Mammary epithelial cell (primary cell): ENCODE measurements at regions of chr1 and their contacts with region 1.

Region 1: DNA sequence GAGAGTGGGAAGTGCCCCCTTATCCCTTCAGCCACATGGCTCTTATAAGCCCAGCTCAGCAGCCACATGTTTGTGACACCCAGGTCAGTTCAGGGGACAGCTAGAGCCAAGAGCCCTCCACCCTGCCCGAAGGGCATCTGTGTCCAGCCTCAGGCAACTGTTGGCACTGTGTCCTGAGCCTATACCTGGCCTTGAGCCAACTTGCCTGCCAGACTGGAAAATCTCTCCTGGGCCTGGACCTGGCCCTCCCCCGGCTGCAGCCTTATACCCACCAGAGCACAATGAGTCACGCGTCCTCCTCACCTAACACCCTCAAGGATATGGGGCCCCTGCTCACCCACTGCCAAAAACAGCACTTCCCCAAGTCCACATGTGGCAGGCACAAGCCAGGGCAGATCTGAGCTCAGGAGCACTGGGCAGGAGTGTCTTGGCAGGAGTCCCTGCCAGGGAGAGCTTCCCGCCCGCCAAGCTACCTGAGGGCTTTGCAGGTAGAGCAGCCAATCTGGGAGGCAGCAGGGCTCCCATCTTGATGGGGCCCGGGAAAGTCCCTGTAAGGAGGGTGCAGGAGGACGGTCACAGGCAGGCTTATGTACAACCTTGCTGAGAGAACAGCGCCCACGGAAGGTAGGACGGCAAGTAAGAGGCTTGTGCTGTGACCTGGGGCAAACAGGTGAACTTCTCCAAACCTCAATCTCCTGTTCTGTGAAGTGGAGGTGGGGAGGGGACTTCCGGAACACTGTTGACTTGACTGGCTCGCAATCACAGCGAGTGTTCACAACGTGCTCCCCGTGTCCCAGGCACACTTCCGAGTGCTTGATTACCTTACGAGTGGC is 19.8 kb upstream of the HSPG2 start:
- DNase-seq: peak; percentile 99
- H3K4me3 ChIP-seq: peak overlapping the region in 1 of 3 experiments; percentile 7
- H3K27ac ChIP-seq: peak overlapping the region; percentile 52
- H3K4me1 ChIP-seq: peaks cover 26% of the 10 kb centered on the region
- H3K27me3 ChIP-seq: no peaks in the 10 kb centered on the region
- CTCF ChIP-seq: peak in 1 of 2 donors; percentile 37

Region 2: GRCh38 chr1:21703318-21703963 is 253.5 kb before region 1 on chr1:
- CTCF ChIA-PET with region 1: no interaction called
- dilution Hi-C with region 1: no loop called
- in situ Hi-C with region 1: loop called in 1 of 2 experiments (anchors 25 kb)
- intact Hi-C with region 1: loop called (anchors 2 kb)
- DNase-seq: peak; percentile 23
- H3K4me3 ChIP-seq: no peak overlapping the region
- H3K27ac ChIP-seq: no peak overlapping the region
- H3K4me1 ChIP-seq: no peaks in the 10 kb centered on the region
- H3K27me3 ChIP-seq: no peaks in the 10 kb centered on the region
- CTCF ChIP-seq: peak; percentile 40 to 43

Region 3: GRCh38 chr1:21882669-21883415 is 74.1 kb before region 1 on chr1:
- CTCF ChIA-PET with region 1: no interaction called
- dilution Hi-C with region 1: loop called (anchors 5 kb)
- in situ Hi-C with region 1: loop called in 1 of 2 experiments (anchors 5 kb)
- intact Hi-C with region 1: no loop called
- DNase-seq: no peak
- H3K4me3 ChIP-seq: no peak overlapping the region
- H3K27ac ChIP-seq: no peak overlapping the region
- H3K4me1 ChIP-seq: no peaks in the 10 kb centered on the region
- H3K27me3 ChIP-seq: no peaks in the 10 kb centered on the region
- CTCF ChIP-seq: no peak

Region 4: GRCh38 chr1:21904704-21905520 is 52.0 kb before region 1 on chr1:
- CTCF ChIA-PET with region 1: no interaction called
- dilution Hi-C with region 1: no loop called
- in situ Hi-C with region 1: no loop called
- intact Hi-C with region 1: loop called (anchors 2 kb)
- DNase-seq: peak; percentile 91
- H3K4me3 ChIP-seq: no peak overlapping the region
- H3K27ac ChIP-seq: peak overlapping the region; percentile 70
- H3K4me1 ChIP-seq: peaks cover 27% of the 10 kb centered on the region
- H3K27me3 ChIP-seq: no peaks in the 10 kb centered on the region
- CTCF ChIP-seq: no peak

Region 5: DNA sequence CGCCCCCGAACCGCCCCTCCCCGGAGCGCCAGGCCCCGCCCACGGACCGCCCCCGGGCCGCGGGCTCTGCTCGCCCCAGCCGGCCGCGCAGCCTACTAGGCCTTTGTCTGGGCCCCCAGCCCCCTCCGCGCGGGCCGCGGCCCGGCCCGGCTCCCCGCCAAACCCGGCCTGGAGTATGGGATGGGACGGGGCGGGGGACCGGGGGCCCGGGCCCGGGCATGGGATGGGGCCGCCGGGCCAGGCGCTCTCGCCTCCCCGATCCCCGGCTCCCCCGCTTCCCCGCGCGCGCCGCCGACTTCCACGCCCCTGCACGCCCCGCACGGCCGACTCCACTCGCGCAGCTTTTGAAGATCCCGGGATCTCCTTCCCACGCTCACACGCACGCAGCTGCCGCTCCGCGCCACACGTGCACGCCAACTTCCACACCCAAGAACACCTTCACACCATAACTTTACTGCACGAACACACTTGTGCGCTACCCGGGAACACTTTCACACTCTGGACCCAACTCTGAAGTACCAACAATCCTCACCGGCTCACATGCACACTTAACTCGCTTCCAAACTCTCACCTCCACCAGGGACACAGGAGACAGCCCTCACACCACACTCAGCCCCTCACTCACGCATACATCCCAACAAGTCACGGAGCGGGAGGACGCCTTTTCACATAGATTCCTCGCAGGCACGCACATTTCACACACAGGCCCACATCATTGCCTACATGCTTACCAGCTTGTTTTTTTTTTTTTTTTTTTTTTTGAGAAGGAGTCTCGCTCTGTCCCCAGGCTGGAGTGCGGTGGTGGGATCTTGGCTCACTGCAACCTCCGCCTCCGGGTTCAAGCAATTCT is 19.3 kb before region 1 on chr1:
- CTCF ChIA-PET with region 1: interaction called, 7 read pairs
- dilution Hi-C with region 1: no loop called
- in situ Hi-C with region 1: no loop called
- intact Hi-C with region 1: loop called (anchors 2 kb)
- DNase-seq: peak; percentile 79
- H3K4me3 ChIP-seq: peak overlapping the region; percentile 15 to 33 (median 18)
- H3K27ac ChIP-seq: peak overlapping the region; percentile 41
- H3K4me1 ChIP-seq: peaks cover 56% of the 10 kb centered on the region
- H3K27me3 ChIP-seq: no peaks in the 10 kb centered on the region
- CTCF ChIP-seq: no peak

Region 6: DNA sequence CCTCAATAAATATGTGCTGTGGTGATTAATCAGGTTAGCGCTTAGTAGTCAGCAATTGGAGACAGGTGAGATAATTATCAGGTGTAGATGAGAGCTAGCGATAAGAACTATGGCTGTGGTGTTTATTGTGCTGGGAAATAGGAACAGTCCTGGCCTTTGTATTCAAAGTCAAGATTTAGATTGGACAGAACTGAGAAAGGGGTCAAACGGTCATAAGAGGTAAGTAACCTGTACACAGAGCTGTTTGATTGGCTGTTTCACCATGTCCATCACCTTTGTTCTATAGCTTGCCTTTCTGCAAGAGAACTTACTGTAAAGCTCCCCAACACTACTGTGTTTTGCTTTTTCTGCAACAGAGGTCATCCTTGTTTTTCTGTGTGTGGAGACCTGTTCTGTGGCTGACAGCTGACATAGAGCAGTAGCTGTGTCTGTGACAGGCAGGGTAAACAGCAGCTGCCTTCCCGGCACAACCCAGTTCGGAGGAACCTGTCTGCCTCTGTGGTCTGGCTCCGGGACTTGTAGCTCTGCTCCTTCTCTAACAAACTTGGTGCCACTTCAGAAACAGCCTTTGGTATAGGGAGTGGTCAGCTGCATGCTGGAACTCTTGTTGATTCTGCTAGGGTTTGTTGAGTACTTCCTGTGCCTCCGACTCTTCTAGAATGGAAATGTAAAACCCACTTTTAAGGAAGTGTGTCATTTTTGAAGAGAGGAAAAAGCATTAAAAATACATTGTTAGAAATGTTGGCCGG is 74.5 kb after region 1 on chr1:
- CTCF ChIA-PET with region 1: no interaction called
- dilution Hi-C with region 1: loop called (anchors 5 kb)
- in situ Hi-C with region 1: no loop called
- intact Hi-C with region 1: no loop called
- DNase-seq: no peak
- H3K4me3 ChIP-seq: no peak overlapping the region
- H3K27ac ChIP-seq: no peak overlapping the region
- H3K4me1 ChIP-seq: no peaks in the 10 kb centered on the region
- H3K27me3 ChIP-seq: no peaks in the 10 kb centered on the region
- CTCF ChIP-seq: no peak